Activated CD4-positive, alpha-beta T cell treated with anti-CD3 and anti-CD28 coated beads for 36 hours (primary cell): ENCODE measurements at regions of chr16 and their contacts with region 1.

Region 1: DNA sequence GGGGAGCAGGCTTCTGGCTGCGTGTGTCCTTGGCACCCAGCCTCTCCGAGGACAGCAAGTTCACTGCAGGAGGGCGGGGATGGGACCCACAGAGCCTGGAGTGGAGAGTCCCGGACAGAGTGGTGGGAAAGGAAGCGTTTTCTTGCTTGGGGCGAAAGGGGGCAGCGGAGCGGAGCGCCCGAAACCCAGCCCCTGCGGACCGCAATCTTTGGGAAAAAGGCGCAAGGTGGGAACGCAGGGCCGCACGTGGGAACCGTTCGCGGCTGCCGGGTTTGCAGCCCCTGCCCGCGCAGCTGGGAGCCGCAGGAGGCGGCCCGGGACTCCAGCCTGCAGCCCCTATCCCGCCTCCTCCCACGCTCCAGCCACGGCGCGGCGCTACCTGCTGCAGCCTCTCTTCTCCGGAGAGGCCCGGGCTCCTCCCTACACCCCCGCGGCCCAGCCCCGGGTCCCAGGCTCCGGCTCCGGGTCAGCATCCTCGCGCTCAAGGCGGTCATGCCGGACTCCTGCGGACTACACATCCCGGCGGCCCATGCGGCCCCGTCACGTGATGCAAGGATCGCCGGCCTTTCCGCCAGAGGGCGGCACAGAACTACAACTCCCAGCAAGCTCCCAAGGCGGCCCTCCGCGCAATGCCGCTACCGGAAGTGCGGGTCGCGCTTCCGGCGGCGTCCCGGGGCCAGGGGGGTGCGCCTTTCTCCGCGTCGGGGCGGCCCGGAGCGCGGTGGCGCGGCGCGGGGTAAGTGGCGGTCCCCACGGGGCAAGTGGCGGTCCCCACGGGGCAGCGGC is at the starts of genes NTHL1 and TSC2:
- DNase-seq: peak; percentile 97
- ATAC-seq: peak; percentile 97
- H3K4me3 Mint-ChIP-seq: peak within 1 kb of the TSS; percentile 89
- H3K27ac Mint-ChIP-seq: peak within 1 kb of the TSS; percentile 85
- H3K4me1 Mint-ChIP-seq: peaks cover 18% of the 10 kb centered on the region
- H3K27me3 Mint-ChIP-seq: no peaks in the 10 kb centered on the region
- total RNA-seq, gene NTHL1: 22.6 to 26.1 TPM
- total RNA-seq, gene TSC2: 49.6 to 72.9 TPM

Region 2: DNA sequence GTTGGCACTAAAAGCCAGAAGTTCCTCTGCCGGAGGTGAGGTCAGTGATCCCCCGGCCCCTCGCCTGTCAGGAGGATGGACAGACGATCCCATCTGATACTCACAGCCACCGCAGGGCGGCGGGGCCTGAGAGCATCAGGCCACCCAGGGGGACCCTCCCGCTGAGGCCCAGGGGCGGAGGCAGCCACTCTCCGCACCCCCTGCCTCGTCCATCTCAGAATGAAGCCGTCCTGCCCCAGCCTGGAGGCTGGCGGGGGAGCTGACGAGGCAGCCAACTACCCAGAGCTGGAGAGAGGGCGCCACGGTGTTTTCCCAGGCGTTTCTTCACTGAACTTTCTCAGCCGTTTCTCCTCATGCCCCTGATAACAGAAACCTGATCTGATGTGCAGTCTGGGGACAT is 769.0 kb before region 1 on chr16:
- CTCF ChIA-PET with region 1: no interaction called
- POLR2A ChIA-PET with region 1: no interaction called
- intact Hi-C with region 1: no loop called
- DNase-seq: no peak
- ATAC-seq: no peak
- H3K4me3 Mint-ChIP-seq: no peak overlapping the region
- H3K27ac Mint-ChIP-seq: no peak overlapping the region
- H3K4me1 Mint-ChIP-seq: no peaks in the 10 kb centered on the region
- H3K27me3 Mint-ChIP-seq: peaks cover 10% of the 10 kb centered on the region

Region 3: DNA sequence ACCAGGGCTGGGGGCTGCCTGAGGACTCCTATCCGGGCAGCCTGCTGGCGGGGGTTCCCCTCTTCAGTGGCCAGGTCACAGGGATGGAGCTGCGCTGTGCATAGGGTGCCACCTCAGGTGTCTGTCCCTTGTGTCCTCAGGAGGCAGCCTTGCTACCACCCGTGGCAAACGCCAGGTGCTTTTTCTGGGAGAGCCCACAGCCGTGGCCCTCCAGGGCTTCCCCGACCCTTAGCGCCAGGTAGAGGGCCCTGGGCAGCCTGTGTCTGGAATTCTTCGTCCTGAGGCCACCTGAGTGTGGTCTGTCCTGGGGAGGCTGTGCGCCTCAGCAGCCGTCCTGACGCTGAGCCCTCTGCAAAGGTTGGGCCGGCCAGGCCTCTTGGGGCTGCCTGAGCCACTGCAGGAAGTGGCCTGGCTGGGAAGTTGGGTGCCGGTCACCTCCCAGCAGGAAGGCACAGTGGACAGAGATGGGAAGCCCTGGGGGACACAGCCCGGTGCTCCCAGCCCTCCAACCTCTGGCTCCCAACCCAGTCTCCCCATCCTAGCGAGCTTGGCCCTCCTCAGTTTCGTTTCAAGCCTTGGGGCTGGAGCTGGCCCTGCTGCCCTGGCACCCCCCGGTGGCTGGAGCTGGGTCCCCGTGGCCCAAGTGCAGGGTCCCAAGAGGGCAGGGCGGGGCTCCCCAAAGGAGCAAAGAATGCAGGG is 721.7 kb before region 1 on chr16:
- CTCF ChIA-PET with region 1: no interaction called
- POLR2A ChIA-PET with region 1: no interaction called
- intact Hi-C with region 1: no loop called
- DNase-seq: no peak
- ATAC-seq: no peak
- H3K4me3 Mint-ChIP-seq: no peak overlapping the region
- H3K27ac Mint-ChIP-seq: no peak overlapping the region
- H3K4me1 Mint-ChIP-seq: no peaks in the 10 kb centered on the region
- H3K27me3 Mint-ChIP-seq: no peaks in the 10 kb centered on the region

Region 4: DNA sequence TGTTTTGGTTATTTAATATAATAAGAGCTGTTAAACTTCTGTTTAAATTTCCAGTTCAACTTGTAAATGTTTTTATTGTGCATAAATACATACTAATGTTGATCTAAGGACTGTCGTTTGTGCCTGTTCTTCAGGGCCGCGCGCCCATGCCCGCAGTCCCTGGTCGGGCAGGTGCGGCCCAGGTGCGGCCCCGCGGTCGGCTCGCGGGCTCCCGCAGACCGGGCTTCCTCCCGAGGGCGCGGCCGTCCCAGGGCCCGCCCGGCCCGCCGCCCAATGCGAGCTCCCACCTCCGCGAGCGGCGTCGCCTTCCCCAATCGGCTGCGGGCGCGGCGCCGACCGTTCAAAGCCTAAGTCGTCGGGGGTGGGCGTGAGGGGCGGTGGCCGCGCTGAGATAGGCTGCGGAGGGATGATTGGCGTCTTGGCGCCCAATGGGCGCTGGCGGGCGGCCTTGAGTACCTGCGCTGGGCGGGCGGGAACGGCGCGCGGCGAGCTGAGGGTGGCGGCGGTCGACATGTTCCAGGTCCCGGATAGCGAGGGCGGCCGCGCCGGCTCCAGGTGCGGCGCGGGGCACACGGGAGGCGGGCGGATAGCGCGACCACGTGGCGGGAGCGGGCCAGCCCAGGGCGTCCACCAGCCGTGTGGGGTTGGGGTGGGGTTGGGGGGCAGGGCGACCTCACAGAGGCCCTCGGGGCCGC is 369.6 kb before region 1 on chr16 and contains the start of gene JPT2:
- CTCF ChIA-PET with region 1: no interaction called
- POLR2A ChIA-PET with region 1: no interaction called
- intact Hi-C with region 1: loop called in 1 of 2 experiments (anchors 1 kb)
- DNase-seq: peak; percentile 98
- ATAC-seq: peak; percentile 99
- H3K4me3 Mint-ChIP-seq: peak within 1 kb of the TSS; percentile 94
- H3K27ac Mint-ChIP-seq: peak within 1 kb of the TSS; percentile 89
- H3K4me1 Mint-ChIP-seq: peaks cover 26% of the 10 kb centered on the region
- H3K27me3 Mint-ChIP-seq: no peaks in the 10 kb centered on the region
- total RNA-seq, gene JPT2: 77.1 to 111 TPM

Region 5: GRCh38 chr16:1782352-1783091 is 265.0 kb before region 1 on chr16 and contains the starts of genes NUBP2 and SPSB3:
- CTCF ChIA-PET with region 1: no interaction called
- POLR2A ChIA-PET with region 1: no interaction called
- intact Hi-C with region 1: loop called in 1 of 2 experiments (anchors 1 kb)
- DNase-seq: peak; percentile 99
- ATAC-seq: peak; percentile 93
- H3K4me3 Mint-ChIP-seq: peak within 1 kb of the TSS; percentile 94
- H3K27ac Mint-ChIP-seq: peak within 1 kb of the TSS; percentile 85
- H3K4me1 Mint-ChIP-seq: peaks cover 26% of the 10 kb centered on the region
- H3K27me3 Mint-ChIP-seq: no peaks in the 10 kb centered on the region
- total RNA-seq, gene NUBP2: 34.4 to 42.4 TPM
- total RNA-seq, gene SPSB3: 12.5 to 13.6 TPM

Region 6: DNA sequence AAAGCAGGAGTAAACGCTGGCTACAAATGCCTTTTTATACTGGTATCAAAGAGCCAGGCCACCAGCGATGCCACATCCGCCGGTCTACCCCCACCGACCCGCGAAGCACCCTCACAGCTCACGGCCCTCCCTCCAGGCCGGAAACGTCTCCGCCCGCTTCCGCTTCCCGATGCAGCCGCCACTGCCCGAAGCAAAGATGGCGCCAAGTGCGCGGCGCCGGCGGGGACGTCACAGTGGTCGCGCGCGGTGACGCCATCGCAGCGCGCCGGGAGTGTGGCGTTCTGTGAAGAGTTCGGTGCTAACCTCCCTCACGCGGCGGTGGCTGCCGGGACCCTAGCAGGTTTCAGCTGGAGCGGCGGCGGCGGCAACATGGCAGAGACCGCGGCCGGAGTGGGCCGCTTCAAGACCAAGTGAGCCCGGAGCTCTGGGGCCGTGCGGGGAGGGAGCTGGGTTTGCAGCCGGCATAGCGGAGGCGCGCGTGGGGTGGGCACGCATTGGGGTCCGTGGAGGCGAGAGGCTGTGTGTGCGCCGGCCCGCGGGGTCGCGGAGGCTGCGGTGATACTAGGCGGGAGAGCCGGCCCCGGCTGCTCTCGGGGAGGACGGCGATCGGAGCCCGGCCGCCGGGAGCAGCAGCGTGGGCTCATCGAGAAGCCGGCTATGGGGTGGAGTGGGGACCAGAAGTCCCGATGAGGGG is 75.6 kb before region 1 on chr16 and contains the start of gene TBL3:
- CTCF ChIA-PET with region 1: no interaction called
- POLR2A ChIA-PET with region 1: no interaction called
- intact Hi-C with region 1: loop called in 1 of 2 experiments (anchors 1 kb)
- DNase-seq: peak; percentile 98
- ATAC-seq: peak; percentile 97
- H3K4me3 Mint-ChIP-seq: peak within 1 kb of the TSS; percentile 99
- H3K27ac Mint-ChIP-seq: peak within 1 kb of the TSS; percentile 99
- H3K4me1 Mint-ChIP-seq: peaks cover 16% of the 10 kb centered on the region
- H3K27me3 Mint-ChIP-seq: no peaks in the 10 kb centered on the region
- total RNA-seq, gene TBL3: 47.4 to 48.6 TPM

Region 7: DNA sequence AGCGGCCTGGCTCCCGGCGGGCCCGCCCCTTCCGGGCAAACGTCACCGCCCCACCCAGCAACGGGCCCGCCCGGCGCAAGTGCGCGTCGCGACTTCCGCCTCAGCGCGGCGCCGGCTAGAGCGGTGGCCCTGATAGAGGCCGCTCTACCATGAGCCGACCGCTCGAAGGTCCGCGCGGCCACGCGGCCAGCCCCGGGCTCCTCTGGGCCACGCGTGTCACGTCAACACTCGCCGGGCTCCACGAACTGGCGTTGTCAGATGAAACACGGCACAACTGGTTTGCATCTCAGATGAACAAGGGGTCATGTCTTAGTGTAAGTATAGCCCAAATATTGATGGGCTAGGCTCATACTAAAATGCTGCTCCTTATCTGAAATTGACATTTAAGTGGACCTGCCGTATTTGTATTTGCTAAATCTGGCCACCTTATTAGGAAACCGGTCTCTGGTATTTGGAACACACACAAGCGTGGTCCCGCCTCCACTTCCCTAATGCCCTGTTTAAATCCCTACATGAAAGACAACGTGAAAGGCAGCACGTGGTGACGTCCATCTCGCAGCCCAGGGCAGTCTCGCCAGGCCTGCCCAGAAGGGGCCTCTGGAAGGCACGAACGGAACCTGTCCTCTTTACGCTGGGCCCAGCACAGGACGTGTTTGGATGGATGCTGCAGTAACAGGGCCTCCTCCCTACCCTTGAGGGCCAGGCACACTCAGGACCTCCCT is 37.6 kb before region 1 on chr16 and contains the start of gene ZNF598:
- CTCF ChIA-PET with region 1: no interaction called
- POLR2A ChIA-PET with region 1: no interaction called
- intact Hi-C with region 1: loop called in 1 of 2 experiments (anchors 1 kb)
- DNase-seq: peak; percentile 90
- ATAC-seq: peak; percentile 93
- H3K4me3 Mint-ChIP-seq: peak within 1 kb of the TSS; percentile 95
- H3K27ac Mint-ChIP-seq: peak within 1 kb of the TSS; percentile 90
- H3K4me1 Mint-ChIP-seq: peaks cover 35% of the 10 kb centered on the region
- H3K27me3 Mint-ChIP-seq: no peaks in the 10 kb centered on the region
- total RNA-seq, gene ZNF598: 64.6 to 69.8 TPM

Region 8: DNA sequence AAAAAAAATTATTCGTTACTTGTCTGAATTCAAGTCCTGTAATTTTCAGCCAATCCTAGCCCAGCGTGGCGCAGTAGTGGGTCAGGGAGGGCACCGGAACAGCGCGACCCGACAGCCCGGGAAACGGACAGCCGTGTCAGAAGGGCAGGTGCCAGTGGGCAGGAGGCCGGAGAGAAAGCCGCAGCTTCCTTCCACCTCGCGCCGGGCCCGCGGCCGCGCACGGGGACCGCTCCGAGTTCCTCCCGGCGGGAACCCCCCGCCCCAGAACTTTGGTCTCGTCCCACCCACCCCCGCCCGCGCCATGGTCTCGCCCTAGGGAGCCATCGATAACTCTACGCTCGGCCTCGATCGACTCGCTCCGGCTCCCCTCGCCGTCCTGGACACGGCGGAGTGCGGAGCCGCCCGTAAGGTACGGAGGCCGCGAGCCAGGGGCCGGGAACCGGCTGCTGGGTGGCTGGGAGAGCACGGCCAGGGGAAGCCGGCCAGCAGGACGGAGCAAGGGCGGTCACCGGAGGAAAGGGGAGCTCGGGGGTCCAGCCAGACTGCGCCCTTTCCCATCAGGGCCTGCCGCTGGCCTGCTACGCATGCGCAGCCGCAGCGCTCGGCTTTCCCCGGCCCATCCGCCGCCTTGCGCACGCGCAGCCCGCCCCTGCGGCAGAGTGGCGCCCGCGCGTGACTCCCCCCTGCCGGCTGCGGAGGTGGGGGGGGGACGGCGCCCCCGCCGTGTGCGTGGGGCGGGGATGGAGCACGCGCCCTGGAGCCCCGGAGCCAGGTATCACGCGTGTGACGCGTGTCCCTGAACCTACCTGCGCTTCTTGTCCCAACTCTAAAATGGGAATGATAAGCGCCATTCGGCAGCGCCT is 157.8 kb after region 1 on chr16 and contains the start of gene MLST8:
- CTCF ChIA-PET with region 1: no interaction called
- POLR2A ChIA-PET with region 1: no interaction called
- intact Hi-C with region 1: loop called in 1 of 2 experiments (anchors 1 kb)
- DNase-seq: peak; percentile 92
- ATAC-seq: peak; percentile 84
- H3K4me3 Mint-ChIP-seq: peak within 1 kb of the TSS; percentile 83
- H3K27ac Mint-ChIP-seq: peak within 1 kb of the TSS; percentile 84
- H3K4me1 Mint-ChIP-seq: peaks cover 16% of the 10 kb centered on the region
- H3K27me3 Mint-ChIP-seq: no peaks in the 10 kb centered on the region
- total RNA-seq, gene MLST8: 61.3 to 76.1 TPM

Region 9: GRCh38 chr16:2251483-2252240 is 204.1 kb after region 1 on chr16 and contains the start of gene ECI1:
- CTCF ChIA-PET with region 1: interaction called, 3 read pairs
- POLR2A ChIA-PET with region 1: interaction called, 12 read pairs
- intact Hi-C with region 1: no loop called
- DNase-seq: peak; percentile 92
- ATAC-seq: peak; percentile 87
- H3K4me3 Mint-ChIP-seq: peak within 1 kb of the TSS; percentile 90
- H3K27ac Mint-ChIP-seq: peak within 1 kb of the TSS; percentile 90
- H3K4me1 Mint-ChIP-seq: peaks cover 5% of the 10 kb centered on the region
- H3K27me3 Mint-ChIP-seq: no peaks in the 10 kb centered on the region
- total RNA-seq, gene ECI1: 23.0 to 41.0 TPM

Region 10: GRCh38 chr16:2296661-2297505 is 249.4 kb after region 1 on chr16:
- CTCF ChIA-PET with region 1: no interaction called
- POLR2A ChIA-PET with region 1: no interaction called
- intact Hi-C with region 1: no loop called
- DNase-seq: peak; percentile 49
- ATAC-seq: peak; percentile 49
- H3K4me3 Mint-ChIP-seq: no peak overlapping the region
- H3K27ac Mint-ChIP-seq: no peak overlapping the region
- H3K4me1 Mint-ChIP-seq: no peaks in the 10 kb centered on the region
- H3K27me3 Mint-ChIP-seq: no peaks in the 10 kb centered on the region